K562 (cell line): ENCODE measurements at regions of chr13 and their contacts with region 1.

Region 1: DNA sequence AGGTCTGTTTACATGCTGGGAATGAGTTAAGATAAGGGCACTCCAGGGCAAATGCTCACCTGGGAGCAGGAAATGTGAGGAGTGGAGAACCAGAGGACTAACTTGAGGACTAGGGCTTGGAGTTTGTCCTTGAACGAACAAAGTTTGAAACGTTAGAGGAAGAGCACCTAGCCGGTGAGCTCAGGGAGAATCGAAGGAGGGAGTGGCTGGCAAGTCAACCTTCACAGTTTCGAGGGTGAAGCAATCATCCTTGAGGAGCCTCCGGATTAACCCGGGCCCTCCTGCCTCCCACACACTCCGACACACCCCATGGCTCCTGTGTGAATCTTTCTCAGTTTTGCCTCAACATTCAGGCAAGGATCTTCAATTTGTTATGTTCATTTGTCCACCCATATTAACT is 58.6 kb downstream of the LMO7 start:
- DNase-seq: no peak
- ATAC-seq: no peak
- H3K4me3 ChIP-seq: no peak overlapping the region
- H3K27ac ChIP-seq: no peak overlapping the region
- H3K4me1 ChIP-seq: no peaks in the 10 kb centered on the region
- H3K27me3 ChIP-seq: no peaks in the 10 kb centered on the region
- CTCF ChIP-seq: no peak
- EP300 ChIP-seq: no peak
- POLR2A ChIP-seq: no peak
- RAD21 ChIP-seq: no peak

Region 2: DNA sequence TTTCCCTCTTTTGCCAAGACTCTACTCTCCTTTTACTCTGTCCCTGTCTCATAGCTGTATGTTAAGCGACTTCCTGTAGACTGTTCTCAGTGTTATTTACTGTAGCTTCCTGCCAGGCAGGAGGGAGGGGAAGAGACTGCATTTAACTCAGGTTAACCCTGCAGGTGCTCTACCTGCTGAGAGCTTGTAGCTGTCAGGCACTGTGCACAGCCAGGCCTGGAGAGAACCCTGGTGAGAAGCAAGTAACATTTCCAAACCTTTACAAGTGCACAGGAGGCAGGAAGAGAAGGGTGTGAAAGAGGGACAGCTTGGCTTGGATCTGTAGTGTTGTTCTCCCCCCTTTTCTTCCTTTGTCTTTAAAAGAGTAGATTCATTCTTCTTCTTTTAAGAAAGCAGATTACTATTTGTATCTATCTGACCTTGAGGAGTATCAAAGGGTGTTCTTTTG is 108.5 kb after region 1 on chr13:
- CTCF ChIA-PET with region 1: no interaction called
- POLR2A ChIA-PET with region 1: no interaction called
- in situ Hi-C with region 1: no loop called
- intact Hi-C with region 1: loop called (anchors 5 kb)
- DNase-seq: no peak
- ATAC-seq: no peak
- H3K4me3 ChIP-seq: no peak overlapping the region
- H3K27ac ChIP-seq: no peak overlapping the region
- H3K4me1 ChIP-seq: no peaks in the 10 kb centered on the region
- H3K27me3 ChIP-seq: peaks cover 0 to 4% of the 10 kb centered on the region in 2 experiments; a peak in 1 of 5 replicates
- CTCF ChIP-seq: no peak
- EP300 ChIP-seq: no peak
- POLR2A ChIP-seq: no peak
- RAD21 ChIP-seq: no peak

Region 3: GRCh38 chr13:75836441-75836840 is 141.7 kb after region 1 on chr13:
- CTCF ChIA-PET with region 1: no interaction called
- POLR2A ChIA-PET with region 1: no interaction called
- in situ Hi-C with region 1: no loop called
- intact Hi-C with region 1: no loop called
- DNase-seq: no peak
- ATAC-seq: no peak
- H3K4me3 ChIP-seq: no peak overlapping the region
- H3K27ac ChIP-seq: no peak overlapping the region
- H3K4me1 ChIP-seq: no peaks in the 10 kb centered on the region
- H3K27me3 ChIP-seq: no peaks in the 10 kb centered on the region
- CTCF ChIP-seq: no peak
- EP300 ChIP-seq: no peak
- POLR2A ChIP-seq: no peak
- RAD21 ChIP-seq: no peak